Heart right ventricle (tissue), 16 donors: ENCODE measurements at regions of chr3 and their contacts with region 1.

Region 1: GRCh38 chr3:106206146-106206545 is 337.3 kb upstream of the CBLB start:
- DNase-seq: peak in 1 of 2 donors; percentile 15
- ATAC-seq: peak in 7 of 8 donors; percentile 70 to 94 (median 87)
- H3K4me3 ChIP-seq: peak overlapping the region in 3 of 10 donors; percentile 12 to 22 (median 12)
- H3K27ac ChIP-seq: peak overlapping the region in 7 of 10 donors; percentile 4 to 80 (median 57)
- H3K4me1 ChIP-seq: peaks cover 0 to 27% (median 12%) of the 10 kb centered on the region in 9 donors
- H3K27me3 ChIP-seq: no peaks in the 10 kb centered on the region
- CTCF ChIP-seq: no peak

Region 2: GRCh38 chr3:105686278-105686897 is 519.8 kb before region 1 on chr3:
- intact Hi-C with region 1: loop called in 8 of 10 experiments (anchors 5 to 10 kb)
- DNase-seq: no peak
- ATAC-seq: peak in 2 of 8 donors; percentile 42 to 49
- H3K4me3 ChIP-seq: no peak overlapping the region
- H3K27ac ChIP-seq: peak overlapping the region in 2 of 10 donors; percentile 10 to 28
- H3K4me1 ChIP-seq: peaks cover 0 to 36% (median 15%) of the 10 kb centered on the region in 9 donors
- H3K27me3 ChIP-seq: no peaks in the 10 kb centered on the region
- CTCF ChIP-seq: peak; percentile 63 to 89 (median 79)

Region 3: GRCh38 chr3:105862217-105862616 is 343.9 kb before region 1 on chr3:
- intact Hi-C with region 1: loop called in 2 of 10 experiments (anchors 5 kb)
- DNase-seq: no peak
- ATAC-seq: no peak
- H3K4me3 ChIP-seq: no peak overlapping the region
- H3K27ac ChIP-seq: peak overlapping the region in 1 of 10 donors; percentile 2
- H3K4me1 ChIP-seq: peaks cover 5 to 97% (median 85%) of the 10 kb centered on the region in 9 donors
- H3K27me3 ChIP-seq: no peaks in the 10 kb centered on the region
- CTCF ChIP-seq: no peak